HEK293 (cell line): ENCODE measurements at regions of chrX and their contacts with region 1.

Region 1: DNA sequence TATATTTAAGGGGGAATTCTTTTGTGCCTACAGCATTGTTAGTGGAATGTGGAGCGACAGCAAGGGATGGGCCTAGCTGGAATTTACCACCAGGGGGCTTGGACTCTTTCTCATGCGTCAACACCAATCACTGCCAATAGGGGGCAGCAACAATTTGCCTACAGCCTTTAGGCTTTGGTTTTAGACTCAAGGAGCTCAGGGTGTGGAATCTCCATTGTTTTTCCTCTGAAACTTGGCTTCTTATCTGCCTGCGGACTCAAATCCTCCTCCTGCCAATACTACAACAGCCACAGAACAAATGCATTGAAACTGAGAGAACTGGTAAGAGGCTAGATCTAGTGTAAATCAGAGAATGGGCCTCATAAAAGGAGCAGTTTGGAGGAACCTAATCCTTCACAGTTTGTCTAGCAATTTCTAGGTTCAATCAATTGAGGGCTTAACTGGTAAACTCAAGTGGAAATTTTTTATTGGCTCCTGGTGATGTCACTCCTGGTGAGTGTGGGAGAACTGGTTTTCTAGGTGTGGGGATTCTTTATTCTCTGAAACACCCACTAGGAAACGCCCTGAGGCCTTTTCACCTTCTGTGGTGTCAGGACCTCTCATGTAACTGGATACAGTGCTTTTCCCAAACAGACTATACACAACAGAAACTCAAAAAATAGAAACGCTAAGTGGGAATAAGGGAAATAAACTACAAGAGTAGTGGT is 27.9 kb upstream of the TMSB4X start:
- H3K4me3 ChIP-seq: no peak overlapping the region
- H3K27ac ChIP-seq: peak overlapping the region; percentile 90
- H3K4me1 ChIP-seq: peaks cover 17% of the 10 kb centered on the region
- CTCF ChIP-seq: peak; percentile 55; the same call in 1 of the 2 replicates

Region 2: GRCh38 chrX:12936947-12937346 is 10.0 kb before region 1 on chrX:
- CTCF ChIA-PET with region 1: interaction called, 24 read pairs
- POLR2A ChIA-PET with region 1: no interaction called
- H3K4me3 ChIP-seq: no peak overlapping the region
- H3K27ac ChIP-seq: no peak overlapping the region
- H3K4me1 ChIP-seq: no peaks in the 10 kb centered on the region
- CTCF ChIP-seq: no peak

Region 3: DNA sequence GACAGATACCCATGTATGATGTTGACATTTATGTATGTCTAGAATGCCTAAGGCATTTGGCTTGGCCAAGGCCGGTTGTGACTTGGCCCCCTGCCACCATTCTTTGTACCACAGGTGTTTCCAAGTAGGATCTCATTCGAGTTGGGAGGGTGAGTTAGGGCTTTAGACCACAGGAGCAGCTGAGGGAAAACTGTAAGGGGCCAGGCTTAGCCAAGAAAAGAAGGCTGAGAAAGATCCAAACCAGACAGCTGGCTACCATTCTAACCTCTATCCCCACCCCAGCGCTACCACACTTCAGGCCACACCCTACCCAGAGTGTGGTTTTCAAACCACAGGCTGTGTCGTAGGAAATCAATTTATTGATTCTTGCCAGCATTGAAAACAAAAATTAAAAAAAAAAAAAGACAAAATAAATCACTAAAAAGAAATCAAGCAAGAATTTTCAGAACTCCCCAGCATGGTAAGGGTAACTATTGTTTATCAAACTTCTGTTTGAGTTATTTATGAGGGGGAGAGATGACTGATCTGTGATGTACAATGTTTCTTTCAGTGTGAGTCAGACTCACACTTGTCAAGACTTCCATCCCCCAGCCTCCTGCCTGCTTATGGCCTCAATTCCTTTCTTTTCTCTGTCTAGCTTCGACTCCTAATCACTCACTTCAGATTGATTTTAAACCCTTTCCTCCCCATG is 37.8 kb after region 1 on chrX:
- CTCF ChIA-PET with region 1: interaction called, 15 read pairs
- POLR2A ChIA-PET with region 1: no interaction called
- H3K4me3 ChIP-seq: no peak overlapping the region
- H3K27ac ChIP-seq: peak overlapping the region; percentile 44; the same call in 1 of the 2 replicates
- H3K4me1 ChIP-seq: peaks cover 9% of the 10 kb centered on the region
- CTCF ChIP-seq: no peak

Region 4: GRCh38 chrX:13022926-13023325 is 75.9 kb after region 1 on chrX:
- CTCF ChIA-PET with region 1: interaction called, 10 read pairs
- POLR2A ChIA-PET with region 1: no interaction called
- H3K4me3 ChIP-seq: no peak overlapping the region
- H3K27ac ChIP-seq: no peak overlapping the region
- H3K4me1 ChIP-seq: no peaks in the 10 kb centered on the region
- CTCF ChIP-seq: no peak

Region 5: GRCh38 chrX:13099121-13099520 is 152.1 kb after region 1 on chrX:
- CTCF ChIA-PET with region 1: interaction called, 16 read pairs
- POLR2A ChIA-PET with region 1: interaction called, 3 read pairs
- H3K4me3 ChIP-seq: no peak overlapping the region
- H3K27ac ChIP-seq: no peak overlapping the region
- H3K4me1 ChIP-seq: peaks cover 16% of the 10 kb centered on the region
- CTCF ChIP-seq: no peak

Region 6: DNA sequence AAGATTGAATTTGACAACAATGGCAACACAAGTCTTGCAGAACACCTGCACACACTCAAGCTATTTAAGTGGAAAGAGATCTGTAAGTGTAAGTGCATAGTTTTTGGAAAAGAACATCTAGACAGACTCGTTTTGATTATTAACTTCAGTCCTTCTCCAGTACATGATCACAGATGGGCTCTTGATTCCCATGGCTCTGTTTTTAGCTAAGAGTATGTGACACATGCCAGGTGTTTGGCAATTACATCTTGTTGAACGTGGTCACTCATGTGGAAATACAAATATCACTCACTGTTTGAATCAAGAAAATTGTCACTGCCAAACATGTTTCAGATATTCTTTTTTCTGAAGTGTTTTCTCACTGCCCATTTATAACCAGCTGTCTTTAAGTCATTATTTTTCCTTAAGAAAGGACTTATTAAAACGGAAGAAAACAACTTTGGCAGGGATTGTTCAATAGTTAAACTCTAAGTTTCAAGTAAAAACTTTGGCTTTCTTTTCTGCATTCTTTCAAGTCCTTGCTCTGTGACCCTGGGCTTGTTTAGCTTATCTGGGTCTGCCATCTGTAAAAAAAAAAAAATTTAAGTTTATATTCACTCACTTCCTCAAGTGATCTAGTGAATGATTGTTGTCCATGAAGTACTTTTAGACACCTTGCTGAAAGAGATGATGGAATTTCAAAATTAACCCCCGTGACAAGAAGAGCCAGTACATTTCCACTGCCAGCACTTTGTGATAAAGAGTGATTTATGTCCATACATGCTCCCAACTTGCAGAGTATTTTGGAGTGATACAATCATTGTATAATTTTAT is 247.5 kb after region 1 on chrX:
- CTCF ChIA-PET with region 1: interaction called, 15 read pairs
- POLR2A ChIA-PET with region 1: interaction called, 6 read pairs
- H3K4me3 ChIP-seq: no peak overlapping the region
- H3K27ac ChIP-seq: peak overlapping the region; percentile 26
- H3K4me1 ChIP-seq: peaks cover 32% of the 10 kb centered on the region
- CTCF ChIP-seq: no peak

Region 7: DNA sequence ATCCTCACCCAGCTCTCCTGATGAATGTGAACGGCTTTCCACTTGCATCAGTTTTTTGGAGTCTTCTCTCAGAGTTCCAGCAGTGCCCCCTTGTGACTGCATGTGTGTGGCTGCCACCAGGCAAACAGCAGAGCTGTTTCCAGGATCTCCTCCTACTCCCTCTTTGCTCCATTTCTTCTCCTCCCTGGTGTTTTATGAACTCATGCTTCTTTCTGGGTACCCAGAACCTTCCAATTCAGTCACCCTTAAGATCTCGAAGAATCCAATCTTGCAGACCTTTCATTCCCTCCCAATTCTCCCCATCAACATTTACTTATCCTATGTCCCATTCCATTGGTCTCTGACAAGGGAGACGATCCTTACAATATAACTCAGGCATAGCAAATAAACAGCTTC is 699.2 kb after region 1 on chrX:
- CTCF ChIA-PET with region 1: interaction called, 18 read pairs
- POLR2A ChIA-PET with region 1: no interaction called
- H3K4me3 ChIP-seq: no peak overlapping the region
- H3K27ac ChIP-seq: no peak overlapping the region; the same call in 1 of the 2 replicates
- H3K4me1 ChIP-seq: peaks cover 5% of the 10 kb centered on the region; the same call in 1 of the 2 replicates
- CTCF ChIP-seq: no peak; the same call in 1 of the 2 replicates